Breast epithelium (tissue), 4 donors: ENCODE measurements at regions of chr16 and their contacts with region 1.

Region 1: DNA sequence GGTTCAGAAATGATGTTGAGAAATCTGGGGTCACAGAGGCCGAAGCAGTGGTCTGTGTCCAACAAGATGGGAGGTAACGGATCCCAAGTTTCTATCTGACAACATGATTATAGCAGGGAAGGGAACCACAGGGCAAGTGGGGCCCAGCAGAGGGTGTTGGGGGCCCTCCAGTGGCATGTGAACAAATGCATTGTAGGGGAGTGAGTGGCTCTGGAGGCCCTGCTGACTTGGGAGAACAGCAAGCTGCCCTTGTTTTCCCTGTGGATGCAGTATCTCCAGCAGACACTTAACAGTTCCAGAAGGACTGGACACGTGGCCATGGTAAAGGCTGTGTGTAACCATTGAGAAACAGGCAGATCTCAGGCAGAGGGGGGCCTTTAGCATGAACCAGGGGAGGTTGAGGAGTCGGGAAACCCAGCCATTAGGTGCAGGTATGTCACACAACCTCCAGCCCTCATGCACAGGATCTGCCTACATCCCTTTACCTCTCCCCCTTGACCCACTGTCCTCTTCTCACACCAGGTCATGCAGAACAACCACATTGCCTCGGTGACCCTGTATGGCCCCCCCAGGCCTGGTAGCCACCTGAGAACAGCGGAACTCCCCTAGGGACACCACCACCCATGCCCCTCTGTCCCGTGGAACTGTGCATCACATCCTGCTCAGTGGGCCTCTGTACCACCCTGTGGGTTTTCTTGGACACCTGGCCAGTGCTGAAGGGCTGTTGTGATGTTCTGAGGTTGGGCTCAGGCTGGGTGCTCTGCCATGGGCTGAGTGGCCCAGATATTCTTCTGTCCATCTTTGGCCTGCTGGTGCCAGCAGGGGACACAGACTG is 4.1 kb downstream of the B3GNT9 start:
- DNase-seq: peak in 1 of 2 donors; percentile 17
- H3K4me3 ChIP-seq: no peak overlapping the region
- H3K27ac ChIP-seq: no peak overlapping the region
- H3K4me1 ChIP-seq: peaks cover 0 to 5% of the 10 kb centered on the region in 2 donors
- H3K27me3 ChIP-seq: no peaks in the 10 kb centered on the region
- CTCF ChIP-seq: no peak
- POLR2A ChIP-seq: no peak

Region 2: DNA sequence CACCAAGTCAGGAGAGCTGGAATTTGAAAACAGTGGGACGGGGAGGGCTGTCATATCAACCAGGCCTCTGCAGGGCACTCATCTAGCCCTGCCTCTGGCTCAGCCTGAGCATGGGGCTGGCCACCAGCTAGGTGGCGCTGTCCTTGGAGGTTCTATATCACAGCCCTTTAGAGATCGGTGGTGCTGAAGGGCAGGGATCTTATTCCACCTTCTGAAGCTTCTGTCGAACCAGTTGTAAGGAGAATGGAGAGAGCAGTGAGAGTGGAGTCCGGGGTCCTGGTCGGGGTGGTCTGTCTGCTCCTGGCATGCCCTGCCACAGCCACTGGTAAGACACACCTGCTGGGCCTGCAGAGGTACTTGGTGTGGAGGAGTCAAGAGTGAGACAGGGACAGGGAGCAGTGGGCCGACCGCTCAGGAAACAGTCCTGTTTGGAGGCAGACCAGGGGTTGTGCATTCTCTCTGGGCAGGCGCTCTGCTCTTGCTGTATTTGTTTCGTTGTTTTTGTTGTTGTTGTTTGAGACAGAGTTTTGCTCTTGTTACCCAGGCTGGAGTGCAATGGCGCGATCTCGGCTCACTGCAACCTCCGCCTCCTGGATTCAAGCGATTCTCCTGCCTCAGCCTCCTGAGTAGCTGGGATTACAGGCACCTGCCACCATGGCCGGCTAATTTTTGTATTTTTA is 185.5 kb before region 1 on chr16 and contains the start of gene CES3:
- intact Hi-C with region 1: loop called (anchors 10 kb)
- DNase-seq: no peak
- H3K4me3 ChIP-seq: no peak within 1 kb of the TSS
- H3K27ac ChIP-seq: peak within 1 kb of the TSS; percentile 35 to 43
- H3K4me1 ChIP-seq: no peaks in the 10 kb centered on the region
- H3K27me3 ChIP-seq: no peaks in the 10 kb centered on the region
- CTCF ChIP-seq: peak in 2 of 3 donors; percentile 8 to 43
- POLR2A ChIP-seq: no peak
- total RNA-seq, gene CES3: 0.29 to 5.9 (median 2.1) TPM

Region 3: DNA sequence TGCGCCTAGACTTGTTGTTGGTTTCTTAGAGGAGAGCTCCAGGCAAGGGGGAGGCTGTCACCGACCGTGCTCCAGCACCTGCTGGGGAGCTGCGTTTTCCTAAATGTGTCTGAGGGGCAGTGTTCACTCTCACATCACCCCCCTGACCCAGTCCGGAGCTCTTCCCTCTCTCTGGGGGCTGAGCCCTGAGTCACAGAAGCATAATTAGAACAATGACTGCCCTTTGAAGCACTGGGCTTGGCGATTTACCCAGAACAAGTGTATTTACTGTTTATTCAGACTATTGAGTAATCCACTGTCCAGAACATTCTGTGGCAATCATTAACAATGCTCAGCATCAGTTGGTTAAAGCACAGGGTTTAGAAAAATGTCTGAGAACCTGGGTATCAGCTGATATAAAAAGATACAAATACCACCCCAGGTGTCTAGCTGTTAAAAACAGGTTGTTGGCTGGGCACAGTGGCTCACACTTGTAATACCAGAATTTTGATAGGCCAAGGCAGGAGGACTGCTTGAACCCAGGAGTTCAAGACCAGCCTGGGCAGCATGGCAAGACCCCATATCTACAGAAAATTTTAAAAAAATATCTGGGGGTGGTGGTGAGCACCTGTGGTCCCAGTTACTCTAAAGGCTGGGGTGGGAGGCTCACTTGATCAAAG is 150.3 kb before region 1 on chr16:
- intact Hi-C with region 1: loop called (anchors 10 kb)
- DNase-seq: peak in 1 of 2 donors; percentile 51
- H3K4me3 ChIP-seq: no peak overlapping the region
- H3K27ac ChIP-seq: peak overlapping the region; percentile 19 to 50
- H3K4me1 ChIP-seq: peaks cover 0 to 3% of the 10 kb centered on the region in 2 donors
- H3K27me3 ChIP-seq: no peaks in the 10 kb centered on the region
- CTCF ChIP-seq: no peak
- POLR2A ChIP-seq: no peak

Region 4: GRCh38 chr16:67173808-67174705 is 27.3 kb after region 1 on chr16:
- intact Hi-C with region 1: no loop called
- DNase-seq: peak; percentile 81 to 86
- H3K4me3 ChIP-seq: peak overlapping the region; percentile 37 to 75 (median 59)
- H3K27ac ChIP-seq: peak overlapping the region; percentile 89 to 96
- H3K4me1 ChIP-seq: peaks cover 5 to 16% of the 10 kb centered on the region in 2 donors
- H3K27me3 ChIP-seq: no peaks in the 10 kb centered on the region
- CTCF ChIP-seq: peak in 1 of 3 donors; percentile 13
- POLR2A ChIP-seq: no peak